CD8-positive, alpha-beta T cell (primary cell): ENCODE measurements at regions of chrX and their contacts with region 1.

Region 1: GRCh38 chrX:65783746-65784145 is 116.3 kb downstream of the MSN start:
- DNase-seq: no peak
- ATAC-seq: no peak
- H3K4me3 ChIP-seq: no peak overlapping the region
- H3K4me3 Mint-ChIP-seq: no peak overlapping the region
- H3K27ac ChIP-seq: no peak overlapping the region
- H3K27ac Mint-ChIP-seq: no peak overlapping the region
- H3K4me1 ChIP-seq: peaks cover 4% of the 10 kb centered on the region
- H3K4me1 Mint-ChIP-seq: peaks cover 11% of the 10 kb centered on the region
- H3K27me3 ChIP-seq: no peaks in the 10 kb centered on the region
- H3K27me3 Mint-ChIP-seq: no peaks in the 10 kb centered on the region
- CTCF ChIP-seq: no peak

Region 2: GRCh38 chrX:65750674-65751469 is 32.9 kb before region 1 on chrX:
- CTCF ChIA-PET with region 1: no interaction called
- POLR2A ChIA-PET with region 1: no interaction called
- intact Hi-C with region 1: no loop called
- DNase-seq: peak in 7 of 9 experiments; percentile 9 to 72 (median 18)
- ATAC-seq: peak; percentile 79
- H3K4me3 ChIP-seq: peak overlapping the region in 1 of 2 experiments; percentile 37
- H3K4me3 Mint-ChIP-seq: peak overlapping the region; percentile 61
- H3K27ac ChIP-seq: no peak overlapping the region
- H3K27ac Mint-ChIP-seq: peak overlapping the region; percentile 76
- H3K4me1 ChIP-seq: peaks cover 25% of the 10 kb centered on the region
- H3K4me1 Mint-ChIP-seq: peaks cover 58% of the 10 kb centered on the region
- H3K27me3 ChIP-seq: no peaks in the 10 kb centered on the region
- H3K27me3 Mint-ChIP-seq: no peaks in the 10 kb centered on the region
- CTCF ChIP-seq: no peak

Region 3: GRCh38 chrX:65837875-65838549 is 54.3 kb after region 1 on chrX:
- CTCF ChIA-PET with region 1: no interaction called
- POLR2A ChIA-PET with region 1: no interaction called
- intact Hi-C with region 1: loop called in 1 of 2 experiments (anchors 10 kb)
- DNase-seq: no peak
- ATAC-seq: no peak
- H3K4me3 ChIP-seq: no peak overlapping the region
- H3K4me3 Mint-ChIP-seq: no peak overlapping the region
- H3K27ac ChIP-seq: no peak overlapping the region
- H3K27ac Mint-ChIP-seq: no peak overlapping the region
- H3K4me1 ChIP-seq: no peaks in the 10 kb centered on the region
- H3K4me1 Mint-ChIP-seq: peaks cover 6% of the 10 kb centered on the region
- H3K27me3 ChIP-seq: no peaks in the 10 kb centered on the region
- H3K27me3 Mint-ChIP-seq: no peaks in the 10 kb centered on the region
- CTCF ChIP-seq: no peak

Region 4: DNA sequence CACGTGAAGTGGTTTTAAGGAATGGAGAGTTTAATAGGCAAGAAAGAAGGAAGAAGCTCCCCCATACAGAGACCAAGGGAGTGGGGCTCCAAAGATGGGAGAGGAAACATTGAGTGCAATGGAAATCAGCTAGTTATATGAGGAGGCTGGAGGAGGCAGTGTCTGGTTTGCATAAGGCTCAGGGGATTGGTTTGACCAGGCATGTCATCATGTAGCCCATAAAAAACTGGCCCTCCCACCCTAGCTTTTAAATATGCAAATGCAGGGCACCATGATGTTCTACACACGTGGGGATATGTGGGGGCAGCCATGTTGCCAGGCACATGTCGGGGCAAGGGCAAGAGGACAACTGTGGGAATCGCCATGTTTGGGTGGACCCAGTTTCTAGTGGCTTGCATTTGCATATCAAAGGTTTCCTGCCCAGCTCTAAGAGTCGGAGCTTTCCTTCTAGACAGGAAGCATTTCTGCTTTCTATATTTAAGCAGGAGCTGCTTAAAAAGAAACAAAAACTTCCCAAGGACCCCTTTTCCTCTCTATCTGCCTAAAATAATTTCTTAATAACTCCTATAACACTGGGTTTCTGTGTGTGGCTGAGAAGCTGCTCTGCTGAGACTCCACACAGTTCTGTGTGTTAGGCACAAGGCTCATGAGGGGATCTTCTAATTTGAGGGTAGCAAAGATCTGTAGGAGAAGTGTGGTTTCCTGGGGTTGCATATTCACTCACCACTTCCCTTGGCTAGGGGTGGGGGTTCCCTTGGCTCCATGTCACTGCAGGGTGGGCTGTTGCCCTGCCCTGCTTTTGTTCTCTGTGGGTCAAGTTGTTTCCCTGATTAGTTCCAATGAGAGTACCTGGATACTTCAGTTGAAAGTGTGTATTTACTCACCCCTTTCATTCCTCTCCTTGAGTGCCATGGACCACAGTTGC is 142.6 kb after region 1 on chrX:
- CTCF ChIA-PET with region 1: no interaction called
- POLR2A ChIA-PET with region 1: no interaction called
- intact Hi-C with region 1: no loop called
- DNase-seq: peak in 7 of 9 experiments; percentile 11 to 75 (median 45)
- ATAC-seq: peak; percentile 80
- H3K4me3 ChIP-seq: peak overlapping the region; percentile 24 to 35
- H3K4me3 Mint-ChIP-seq: peak overlapping the region; percentile 71
- H3K27ac ChIP-seq: peak overlapping the region; percentile 47 to 70
- H3K27ac Mint-ChIP-seq: peak overlapping the region; percentile 87
- H3K4me1 ChIP-seq: peaks cover 40% of the 10 kb centered on the region
- H3K4me1 Mint-ChIP-seq: peaks cover 53% of the 10 kb centered on the region
- H3K27me3 ChIP-seq: no peaks in the 10 kb centered on the region
- H3K27me3 Mint-ChIP-seq: no peaks in the 10 kb centered on the region
- CTCF ChIP-seq: no peak